Activated B cell treated with CpG ODN at 0.5 μM for 24 hours (primary cell): ENCODE measurements at regions of chr18 and their contacts with region 1.

Region 1: DNA sequence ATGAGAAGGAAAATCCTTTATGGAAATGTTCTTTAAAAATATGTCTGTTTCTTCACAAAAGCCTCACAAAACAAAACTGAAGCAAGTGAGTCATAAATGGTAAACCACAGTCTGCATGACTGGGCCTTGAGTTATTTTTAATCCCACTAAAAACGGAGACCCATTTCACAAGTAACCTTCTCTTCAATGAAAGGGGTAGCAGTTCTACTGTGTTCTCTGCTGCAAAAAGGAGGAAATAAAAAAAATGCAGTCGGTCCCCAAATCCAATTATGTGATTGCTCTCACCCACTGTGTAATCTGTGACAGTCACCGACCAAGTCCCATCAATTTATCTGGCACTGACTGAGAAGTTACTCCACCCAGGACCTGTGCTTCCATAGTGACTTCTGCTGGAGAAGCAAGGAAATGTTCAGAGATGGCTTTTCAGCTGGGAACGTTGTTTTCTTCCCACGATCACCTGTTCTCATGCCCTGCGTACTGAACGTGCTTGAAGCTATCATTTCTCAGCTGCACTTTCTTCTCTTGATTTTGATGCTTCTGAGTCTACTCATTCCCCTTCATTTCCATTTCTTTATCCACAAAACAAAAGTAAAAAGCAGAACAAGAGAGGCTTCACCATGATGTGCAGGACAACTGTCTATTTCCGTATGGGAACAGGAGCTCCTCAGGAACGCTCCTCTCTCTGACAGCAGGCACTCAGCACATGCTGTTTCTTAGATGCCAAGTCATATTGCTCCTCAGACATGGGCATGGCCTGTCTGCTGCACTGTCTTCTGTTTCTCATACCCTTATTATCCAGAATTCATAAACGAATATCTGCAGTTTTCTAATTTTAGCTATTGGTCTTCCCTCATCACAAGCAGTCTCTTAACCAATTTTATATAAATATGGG is 80.0 kb upstream of the TMEM200C start:
- DNase-seq: no peak
- ATAC-seq: peak; percentile 82
- H3K4me3 Mint-ChIP-seq: peak overlapping the region; percentile 28
- H3K27ac Mint-ChIP-seq: peak overlapping the region; percentile 61
- H3K4me1 Mint-ChIP-seq: peaks cover 45% of the 10 kb centered on the region
- H3K27me3 Mint-ChIP-seq: no peaks in the 10 kb centered on the region
- CTCF ChIP-seq: no peak

Region 2: GRCh38 chr18:5930789-5931188 is 44.6 kb before region 1 on chr18:
- CTCF ChIA-PET with region 1: no interaction called
- POLR2A ChIA-PET with region 1: no interaction called
- intact Hi-C with region 1: loop called (anchors 5 kb)
- DNase-seq: no peak
- ATAC-seq: no peak
- H3K4me3 Mint-ChIP-seq: no peak overlapping the region
- H3K27ac Mint-ChIP-seq: no peak overlapping the region
- H3K4me1 Mint-ChIP-seq: no peaks in the 10 kb centered on the region
- H3K27me3 Mint-ChIP-seq: peaks cover 9% of the 10 kb centered on the region
- CTCF ChIP-seq: no peak

Region 3: DNA sequence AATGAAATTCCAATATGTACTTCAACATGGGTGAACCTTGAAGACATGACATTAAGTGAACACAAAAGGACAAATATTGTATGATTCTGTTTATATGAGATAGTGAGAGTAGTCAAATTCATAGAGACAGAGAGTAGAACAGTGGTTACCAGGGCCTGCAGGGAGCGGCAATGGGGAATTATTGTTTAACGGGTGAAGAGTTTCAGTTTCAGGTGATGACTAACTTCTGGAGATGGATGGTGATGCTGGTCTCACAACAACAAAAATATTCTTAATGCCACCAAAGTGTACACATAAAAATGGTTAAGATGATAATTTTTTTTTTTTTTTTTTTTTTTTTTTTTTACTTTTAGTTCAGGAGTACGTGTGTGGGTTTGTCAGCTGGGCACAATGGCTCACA is 29.3 kb after region 1 on chr18:
- CTCF ChIA-PET with region 1: no interaction called
- POLR2A ChIA-PET with region 1: no interaction called
- intact Hi-C with region 1: loop called (anchors 1 kb)
- DNase-seq: no peak
- ATAC-seq: peak; percentile 79
- H3K4me3 Mint-ChIP-seq: no peak overlapping the region
- H3K27ac Mint-ChIP-seq: no peak overlapping the region
- H3K4me1 Mint-ChIP-seq: peaks cover 7% of the 10 kb centered on the region
- H3K27me3 Mint-ChIP-seq: no peaks in the 10 kb centered on the region
- CTCF ChIP-seq: no peak

Region 4: GRCh38 chr18:6015364-6015763 is 40.0 kb after region 1 on chr18:
- CTCF ChIA-PET with region 1: no interaction called
- POLR2A ChIA-PET with region 1: no interaction called
- intact Hi-C with region 1: no loop called
- DNase-seq: no peak
- ATAC-seq: no peak
- H3K4me3 Mint-ChIP-seq: no peak overlapping the region
- H3K27ac Mint-ChIP-seq: no peak overlapping the region
- H3K4me1 Mint-ChIP-seq: no peaks in the 10 kb centered on the region
- H3K27me3 Mint-ChIP-seq: no peaks in the 10 kb centered on the region
- CTCF ChIP-seq: no peak

Region 5: GRCh38 chr18:6414118-6414722 is 438.9 kb after region 1 on chr18:
- CTCF ChIA-PET with region 1: no interaction called
- POLR2A ChIA-PET with region 1: no interaction called
- intact Hi-C with region 1: loop called (anchors 10 kb)
- DNase-seq: peak; percentile 63
- ATAC-seq: peak; percentile 83
- H3K4me3 Mint-ChIP-seq: peak overlapping the region; percentile 75
- H3K27ac Mint-ChIP-seq: no peak overlapping the region
- H3K4me1 Mint-ChIP-seq: peaks cover 30% of the 10 kb centered on the region
- H3K27me3 Mint-ChIP-seq: peaks cover 8% of the 10 kb centered on the region
- CTCF ChIP-seq: no peak